PC-3 (cell line): ENCODE measurements at regions of chr3 and their contacts with region 1.

Region 1: DNA sequence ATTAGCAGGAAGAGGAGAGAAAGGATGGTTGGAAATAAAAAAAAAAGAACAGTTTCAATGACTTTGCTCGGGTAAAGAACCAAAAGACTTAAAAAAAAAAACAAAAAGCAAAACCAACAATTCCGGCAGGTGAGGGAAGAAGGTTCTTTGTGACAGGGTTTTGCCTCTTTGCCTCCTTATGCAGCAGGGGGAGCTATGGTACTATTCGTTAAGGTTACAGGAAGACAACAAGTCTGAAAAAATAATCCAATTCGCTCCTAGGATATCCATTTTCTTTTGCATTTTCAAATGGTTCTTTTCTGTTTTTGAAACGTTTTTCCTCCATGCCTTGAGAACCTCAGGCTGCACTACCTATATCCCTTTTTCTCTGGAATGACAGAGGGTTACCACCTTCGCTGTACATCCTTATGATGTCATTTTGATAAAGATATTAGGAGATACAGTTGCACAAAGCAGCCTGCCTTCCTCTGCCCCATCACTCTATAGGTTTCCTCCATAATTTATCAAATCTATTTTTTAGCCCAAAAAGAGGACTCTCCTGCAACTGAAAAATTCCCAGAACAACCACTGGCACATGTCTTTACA is 55.0 kb downstream of the CFAP20DC start:
- DNase-seq: peak; percentile 83
- ATAC-seq: peak; percentile 18; the same call in 1 of the 2 replicates
- H3K4me3 ChIP-seq: no peak overlapping the region; the same call in 1 of the 2 replicates
- H3K27ac ChIP-seq: peak overlapping the region; percentile 19; the same call in 1 of the 2 replicates
- H3K4me1 ChIP-seq: peaks cover 19% of the 10 kb centered on the region
- H3K27me3 ChIP-seq: no peaks in the 10 kb centered on the region
- CTCF ChIP-seq: peak; percentile 94

Region 2: GRCh38 chr3:58824285-58824684 is 170.6 kb before region 1 on chr3:
- CTCF ChIA-PET with region 1: interaction called, 4 read pairs
- POLR2A ChIA-PET with region 1: no interaction called
- intact Hi-C with region 1: loop called (anchors 2 kb)
- DNase-seq: peak; percentile 81
- ATAC-seq: peak; percentile 81
- H3K4me3 ChIP-seq: no peak overlapping the region
- H3K27ac ChIP-seq: no peak overlapping the region
- H3K4me1 ChIP-seq: no peaks in the 10 kb centered on the region
- H3K27me3 ChIP-seq: no peaks in the 10 kb centered on the region
- CTCF ChIP-seq: peak; percentile 97

Region 3: DNA sequence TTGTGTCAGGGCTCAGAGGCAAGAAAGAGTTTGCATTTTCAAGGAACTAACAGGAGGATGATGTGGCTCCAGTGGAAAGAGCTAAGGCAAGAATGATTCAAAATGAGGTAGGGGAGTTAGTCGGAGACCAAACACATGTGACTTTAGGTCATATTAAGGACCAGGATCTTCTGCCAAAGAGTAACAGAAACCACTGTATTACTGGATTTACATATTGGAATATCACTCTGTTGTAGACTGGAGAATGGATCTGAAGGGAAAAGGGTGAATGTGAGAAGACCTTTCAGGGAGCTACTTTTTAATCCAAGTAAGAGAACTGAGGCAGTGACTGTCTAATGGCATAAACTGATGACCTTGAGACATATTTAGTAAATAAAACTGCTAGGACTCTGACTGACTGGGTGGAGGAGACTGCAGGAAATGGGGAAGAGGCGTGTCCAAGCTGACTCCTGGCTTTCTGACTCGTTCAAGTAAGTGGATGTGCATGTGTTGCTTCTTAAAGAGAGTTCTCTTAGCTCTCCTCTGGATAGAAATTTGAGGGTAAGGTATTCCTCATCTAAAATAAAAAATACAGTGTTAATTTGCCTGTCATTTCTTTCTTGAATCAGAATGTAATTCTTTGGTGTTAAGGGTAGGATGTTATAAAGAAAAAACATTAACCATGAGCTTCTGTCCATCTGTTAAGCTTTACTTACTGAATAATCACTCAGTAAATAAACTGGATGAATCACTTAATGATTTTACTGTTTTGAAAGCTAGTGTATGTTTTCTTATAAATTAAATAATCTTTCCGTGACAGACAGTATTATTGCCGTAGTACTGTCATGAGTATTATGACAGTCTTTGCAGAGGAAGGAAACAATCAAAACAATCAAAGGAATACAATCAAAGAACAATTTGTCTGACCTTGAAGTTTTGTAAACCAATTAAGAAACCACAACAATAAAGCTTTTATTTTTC is 113.3 kb after region 1 on chr3:
- CTCF ChIA-PET with region 1: interaction called, 3 read pairs
- POLR2A ChIA-PET with region 1: no interaction called
- intact Hi-C with region 1: loop called (anchors 1 kb)
- DNase-seq: peak; percentile 67
- ATAC-seq: peak; percentile 82
- H3K4me3 ChIP-seq: peak overlapping the region; percentile 8; the same call in 1 of the 2 replicates
- H3K27ac ChIP-seq: peak overlapping the region; percentile 72
- H3K4me1 ChIP-seq: peaks cover 36% of the 10 kb centered on the region
- H3K27me3 ChIP-seq: no peaks in the 10 kb centered on the region
- CTCF ChIP-seq: no peak

Region 4: GRCh38 chr3:59185586-59186369 is 190.9 kb after region 1 on chr3:
- CTCF ChIA-PET with region 1: no interaction called
- POLR2A ChIA-PET with region 1: no interaction called
- intact Hi-C with region 1: loop called (anchors 5 kb)
- DNase-seq: peak; percentile 28
- ATAC-seq: no peak
- H3K4me3 ChIP-seq: no peak overlapping the region
- H3K27ac ChIP-seq: no peak overlapping the region
- H3K4me1 ChIP-seq: peaks cover 8% of the 10 kb centered on the region; the same call in 1 of the 2 replicates
- H3K27me3 ChIP-seq: no peaks in the 10 kb centered on the region
- CTCF ChIP-seq: no peak

Region 5: GRCh38 chr3:59367150-59367549 is 372.3 kb after region 1 on chr3:
- CTCF ChIA-PET with region 1: no interaction called
- POLR2A ChIA-PET with region 1: no interaction called
- intact Hi-C with region 1: loop called (anchors 10 kb)
- DNase-seq: peak; percentile 60
- ATAC-seq: peak; percentile 63
- H3K4me3 ChIP-seq: no peak overlapping the region
- H3K27ac ChIP-seq: no peak overlapping the region
- H3K4me1 ChIP-seq: peaks cover 31% of the 10 kb centered on the region
- H3K27me3 ChIP-seq: no peaks in the 10 kb centered on the region
- CTCF ChIP-seq: no peak

Region 6: DNA sequence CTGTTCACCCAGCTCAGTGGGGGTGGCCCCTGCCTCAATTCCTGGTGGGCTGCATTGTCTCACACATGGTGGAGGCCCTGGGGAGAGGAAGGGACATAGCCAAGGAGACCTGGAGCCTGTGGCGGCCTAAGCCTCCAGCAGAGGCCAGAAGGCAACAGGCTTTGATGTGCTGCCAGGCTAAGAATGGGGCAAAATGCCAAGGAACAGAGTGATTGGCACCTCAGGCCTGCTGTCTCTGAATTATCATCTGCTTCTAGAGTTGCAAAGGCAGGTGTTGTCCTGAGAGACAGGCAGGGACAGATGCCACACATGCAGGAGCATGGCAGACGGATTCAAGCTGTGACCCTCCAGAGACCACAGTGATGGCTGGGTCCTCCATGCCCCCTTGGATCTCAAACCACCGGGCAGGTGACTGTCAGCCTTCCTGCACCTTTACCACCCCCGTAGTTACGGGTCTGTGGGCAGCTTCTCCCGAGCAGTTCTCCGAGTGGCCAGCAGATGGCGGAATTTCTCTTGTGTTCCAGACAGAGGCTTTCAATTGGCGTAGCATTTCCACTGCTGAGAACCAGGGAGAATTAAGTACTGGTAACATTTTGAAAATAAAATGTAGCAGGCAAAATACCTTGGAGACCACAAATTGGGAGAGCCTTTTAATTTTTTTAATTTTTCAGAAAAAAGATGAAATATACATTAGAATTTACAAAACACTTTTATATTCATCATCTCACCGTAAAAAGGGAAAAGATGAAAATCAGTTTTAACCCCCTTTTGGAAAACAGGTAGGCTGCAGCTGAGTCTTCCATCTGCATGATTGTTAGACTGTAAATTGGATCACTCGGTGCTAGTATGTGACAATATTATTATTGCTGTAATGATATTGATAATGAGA is 580.5 kb after region 1 on chr3:
- CTCF ChIA-PET with region 1: no interaction called
- POLR2A ChIA-PET with region 1: no interaction called
- intact Hi-C with region 1: loop called (anchors 2 kb)
- DNase-seq: peak; percentile 92
- ATAC-seq: peak; percentile 75
- H3K4me3 ChIP-seq: no peak overlapping the region
- H3K27ac ChIP-seq: no peak overlapping the region
- H3K4me1 ChIP-seq: peaks cover 22% of the 10 kb centered on the region
- H3K27me3 ChIP-seq: no peaks in the 10 kb centered on the region
- CTCF ChIP-seq: peak; percentile 97

Region 7: DNA sequence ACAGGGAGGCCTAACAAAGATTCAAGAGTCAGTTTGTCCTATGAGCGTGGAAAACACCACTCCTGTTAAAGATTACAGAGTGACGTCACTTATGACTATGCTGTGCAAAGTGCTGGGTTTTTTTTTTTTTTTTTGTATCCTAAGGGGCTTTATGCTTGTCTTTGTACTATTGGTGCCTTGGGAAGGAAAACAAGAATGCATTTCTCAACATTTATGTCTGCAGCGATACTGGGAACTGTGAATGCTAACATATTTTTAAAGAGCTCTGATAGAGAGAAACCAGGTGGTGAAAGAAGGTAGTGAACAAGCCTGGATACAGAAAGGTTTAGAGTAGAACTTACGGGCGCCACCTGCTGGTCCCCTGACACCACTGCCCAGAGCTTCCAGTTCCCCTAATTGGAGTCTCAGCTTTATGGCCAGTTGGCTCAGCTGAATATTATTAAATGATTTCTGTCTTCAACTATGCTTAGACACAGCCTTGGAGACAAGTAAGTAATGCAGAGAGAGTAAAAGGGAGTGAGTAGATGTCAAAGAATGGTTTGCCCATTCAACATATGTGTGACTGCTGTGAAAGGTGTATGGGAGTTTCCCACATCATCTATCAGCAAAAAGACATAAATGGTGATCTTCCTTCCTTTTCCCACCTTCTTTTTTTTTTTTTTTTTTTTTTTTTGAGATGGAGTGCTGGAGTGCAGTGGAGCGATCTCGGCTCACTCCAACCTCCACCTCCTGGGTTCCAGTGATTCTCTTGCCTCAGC is 862.9 kb after region 1 on chr3:
- CTCF ChIA-PET with region 1: interaction called, 3 read pairs
- POLR2A ChIA-PET with region 1: no interaction called
- intact Hi-C with region 1: loop called (anchors 1 kb)
- DNase-seq: peak; percentile 86
- ATAC-seq: peak; percentile 99
- H3K4me3 ChIP-seq: no peak overlapping the region
- H3K27ac ChIP-seq: no peak overlapping the region
- H3K4me1 ChIP-seq: peaks cover 10% of the 10 kb centered on the region; the same call in 1 of the 2 replicates
- H3K27me3 ChIP-seq: no peaks in the 10 kb centered on the region
- CTCF ChIP-seq: peak; percentile 96